ENCODE measurements at regions of chr9 and their contacts with region 1.

Region 1: DNA sequence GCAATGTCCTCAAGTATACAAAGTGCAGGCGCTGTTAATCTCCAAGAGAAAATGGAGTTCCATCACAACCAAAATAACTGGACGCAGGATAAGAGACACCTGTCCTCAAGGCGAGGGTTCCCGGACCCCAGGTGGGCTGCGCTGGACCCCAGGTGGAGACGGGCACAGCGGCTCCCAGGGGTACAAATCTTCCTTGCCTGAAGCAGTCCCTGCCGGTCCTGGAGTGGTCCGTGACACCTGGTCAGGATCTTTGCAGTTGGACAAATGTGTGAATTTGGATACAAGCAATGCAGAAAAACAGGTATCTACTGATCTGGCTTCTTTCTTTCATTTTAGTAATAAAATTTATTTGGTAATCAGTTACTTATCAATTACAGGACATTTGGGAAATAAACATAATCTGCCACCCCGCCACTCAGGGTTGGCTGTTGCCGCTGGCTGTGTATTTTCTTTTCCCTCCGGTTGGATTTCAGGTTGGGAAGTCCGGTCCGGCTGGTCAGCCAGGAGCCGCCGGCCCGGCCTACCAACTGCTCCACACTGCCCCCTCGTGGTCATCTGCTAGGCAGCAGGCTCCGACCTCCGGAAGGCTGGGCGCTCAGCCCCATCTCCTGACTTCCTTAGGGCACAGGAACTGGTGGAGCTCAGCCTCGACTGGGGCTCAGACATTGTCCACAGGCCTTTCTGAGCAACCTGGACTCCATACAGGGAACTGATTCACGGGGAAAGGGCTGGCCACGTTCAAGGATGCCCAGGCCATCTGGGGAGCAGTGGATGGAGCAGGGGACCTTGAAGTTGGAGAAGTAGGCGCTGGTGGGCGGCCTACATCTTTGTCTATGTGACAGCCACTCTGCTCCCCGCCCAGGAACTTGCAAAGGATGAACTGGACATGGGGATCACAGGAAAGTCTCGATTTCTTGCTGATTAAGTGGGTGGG is 43.4 kb downstream of the NXNL2 start:
- DNase-seq: peak in 7 of 9 donors; percentile 36 to 78 (median 48)
- ATAC-seq: peak; percentile 80
- H3K4me3 ChIP-seq: no peak overlapping the region
- H3K4me3 Mint-ChIP-seq: peak overlapping the region in 5 of 10 donors; percentile 38 to 63 (median 59)
- H3K27ac ChIP-seq: no peak overlapping the region
- H3K27ac Mint-ChIP-seq: peak overlapping the region in 1 of 9 donors; percentile 34
- H3K4me1 ChIP-seq: no peaks in the 10 kb centered on the region
- H3K4me1 Mint-ChIP-seq: peaks cover 0 to 6% (median 3%) of the 10 kb centered on the region in 7 donors
- H3K27me3 ChIP-seq: no peaks in the 10 kb centered on the region
- H3K27me3 Mint-ChIP-seq: peaks cover 7 to 25% (median 16%) of the 10 kb centered on the region in 5 donors

Region 2: GRCh38 chr9:87950765-87951488 is 627.5 kb before region 1 on chr9:
- CTCF ChIA-PET with region 1: no interaction called
- POLR2A ChIA-PET with region 1: no interaction called
- intact Hi-C with region 1: loop called in 1 of 2 experiments (anchors 1 kb)
- DNase-seq: peak in 1 of 9 donors; percentile 25
- ATAC-seq: no peak
- H3K4me3 ChIP-seq: no peak overlapping the region
- H3K4me3 Mint-ChIP-seq: no peak overlapping the region
- H3K27ac ChIP-seq: no peak overlapping the region
- H3K27ac Mint-ChIP-seq: no peak overlapping the region
- H3K4me1 ChIP-seq: no peaks in the 10 kb centered on the region
- H3K4me1 Mint-ChIP-seq: peaks cover 0 to 8% (median 0%) of the 10 kb centered on the region in 7 donors
- H3K27me3 ChIP-seq: no peaks in the 10 kb centered on the region
- H3K27me3 Mint-ChIP-seq: peaks cover 3 to 37% (median 22%) of the 10 kb centered on the region in 5 donors

Region 3: GRCh38 chr9:88106491-88106890 is 471.9 kb before region 1 on chr9:
- CTCF ChIA-PET with region 1: interaction called, 3 read pairs
- POLR2A ChIA-PET with region 1: no interaction called
- intact Hi-C with region 1: loop called (anchors 1 kb)
- DNase-seq: peak in 1 of 9 donors; percentile 3
- ATAC-seq: no peak
- H3K4me3 ChIP-seq: no peak overlapping the region
- H3K4me3 Mint-ChIP-seq: no peak overlapping the region
- H3K27ac ChIP-seq: no peak overlapping the region
- H3K27ac Mint-ChIP-seq: no peak overlapping the region
- H3K4me1 ChIP-seq: no peaks in the 10 kb centered on the region
- H3K4me1 Mint-ChIP-seq: peaks cover 0 to 10% (median 0%) of the 10 kb centered on the region in 7 donors
- H3K27me3 ChIP-seq: peaks cover 0 to 3% of the 10 kb centered on the region in 2 donors
- H3K27me3 Mint-ChIP-seq: peaks cover 21 to 52% (median 34%) of the 10 kb centered on the region in 5 donors

Region 4: DNA sequence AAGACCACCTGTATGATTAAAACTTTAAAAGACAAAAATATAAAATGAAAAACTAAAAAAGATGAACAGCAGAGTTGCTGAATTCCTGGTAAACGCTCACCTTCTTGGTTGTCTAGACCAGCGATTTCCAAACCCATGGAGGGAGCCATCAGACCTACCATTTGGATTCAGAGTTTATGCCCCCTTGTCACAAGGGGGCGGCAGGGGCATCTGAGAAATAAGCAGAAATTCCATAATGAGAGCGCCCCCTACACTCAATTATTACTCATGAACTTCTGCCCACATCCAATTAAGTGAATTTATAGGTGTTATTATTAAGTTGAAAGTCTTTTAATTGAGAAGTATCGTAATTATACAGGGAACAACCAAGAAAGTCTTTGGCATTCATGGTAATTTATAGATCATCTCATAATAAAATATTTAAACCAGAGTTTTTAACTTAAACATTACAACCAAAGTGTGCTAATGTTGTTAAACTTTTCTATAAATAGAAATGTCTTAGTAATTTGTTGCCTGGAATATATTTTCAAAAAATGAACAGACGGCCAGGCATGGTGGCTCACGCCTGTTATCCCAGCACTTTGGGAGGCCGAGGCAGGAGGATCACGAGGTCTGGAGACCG is 404.9 kb before region 1 on chr9:
- CTCF ChIA-PET with region 1: interaction called, 4 read pairs
- POLR2A ChIA-PET with region 1: interaction called, 3 read pairs
- intact Hi-C with region 1: loop called in 1 of 2 experiments (anchors 1 kb)
- DNase-seq: peak in 8 of 9 donors; percentile 28 to 64 (median 52)
- ATAC-seq: peak; percentile 72
- H3K4me3 ChIP-seq: no peak overlapping the region
- H3K4me3 Mint-ChIP-seq: no peak overlapping the region
- H3K27ac ChIP-seq: no peak overlapping the region
- H3K27ac Mint-ChIP-seq: no peak overlapping the region
- H3K4me1 ChIP-seq: no peaks in the 10 kb centered on the region
- H3K4me1 Mint-ChIP-seq: peaks cover 0 to 9% (median 2%) of the 10 kb centered on the region in 7 donors
- H3K27me3 ChIP-seq: no peaks in the 10 kb centered on the region
- H3K27me3 Mint-ChIP-seq: peaks cover 0 to 42% (median 7%) of the 10 kb centered on the region in 5 donors

Region 5: GRCh38 chr9:88458716-88459465 is 119.5 kb before region 1 on chr9:
- CTCF ChIA-PET with region 1: no interaction called
- POLR2A ChIA-PET with region 1: no interaction called
- intact Hi-C with region 1: no loop called
- DNase-seq: no peak
- ATAC-seq: no peak
- H3K4me3 ChIP-seq: no peak overlapping the region
- H3K4me3 Mint-ChIP-seq: no peak overlapping the region
- H3K27ac ChIP-seq: no peak overlapping the region
- H3K27ac Mint-ChIP-seq: no peak overlapping the region
- H3K4me1 ChIP-seq: no peaks in the 10 kb centered on the region
- H3K4me1 Mint-ChIP-seq: peaks cover 0 to 7% (median 5%) of the 10 kb centered on the region in 7 donors
- H3K27me3 ChIP-seq: no peaks in the 10 kb centered on the region
- H3K27me3 Mint-ChIP-seq: no peaks in the 10 kb centered on the region

Region 6: GRCh38 chr9:88835038-88835466 is 256.7 kb after region 1 on chr9:
- CTCF ChIA-PET with region 1: no interaction called
- POLR2A ChIA-PET with region 1: no interaction called
- intact Hi-C with region 1: no loop called
- DNase-seq: peak in 7 of 9 donors; percentile 45 to 81 (median 79)
- ATAC-seq: peak; percentile 95
- H3K4me3 ChIP-seq: no peak overlapping the region
- H3K4me3 Mint-ChIP-seq: peak overlapping the region in 9 of 10 donors; percentile 2 to 82 (median 64)
- H3K27ac ChIP-seq: no peak overlapping the region
- H3K27ac Mint-ChIP-seq: peak overlapping the region in 6 of 9 donors; percentile 22 to 90 (median 69)
- H3K4me1 ChIP-seq: peaks cover 16 to 25% of the 10 kb centered on the region in 2 donors
- H3K4me1 Mint-ChIP-seq: peaks cover 9 to 35% (median 27%) of the 10 kb centered on the region in 7 donors
- H3K27me3 ChIP-seq: peaks cover 0 to 19% of the 10 kb centered on the region in 2 donors
- H3K27me3 Mint-ChIP-seq: peaks cover 55 to 82% (median 72%) of the 10 kb centered on the region in 5 donors

Measured in naive thymus-derived CD4-positive, alpha-beta T cell (primary cell).